B cell (primary cell): ENCODE measurements at regions of chr3 and their contacts with region 1.

Region 1: GRCh38 chr3:14651440-14652251 is at the start of gene CCDC174:
- DNase-seq: peak; percentile 100
- ATAC-seq: peak; percentile 98
- H3K4me3 ChIP-seq: peak within 1 kb of the TSS; percentile 79 to 92 (median 88)
- H3K4me3 Mint-ChIP-seq: peak within 1 kb of the TSS; percentile 91
- H3K27ac ChIP-seq: peak within 1 kb of the TSS; percentile 97 to 98
- H3K27ac Mint-ChIP-seq: peak within 1 kb of the TSS; percentile 94
- H3K4me1 ChIP-seq: peaks cover 21 to 28% of the 10 kb centered on the region in 2 donors
- H3K4me1 Mint-ChIP-seq: peaks cover 36% of the 10 kb centered on the region
- H3K27me3 ChIP-seq: no peaks in the 10 kb centered on the region
- H3K27me3 Mint-ChIP-seq: no peaks in the 10 kb centered on the region
- CTCF ChIP-seq: no peak
- total RNA-seq, gene CCDC174: 36.5 and 47.1 TPM in 2 replicates

Region 2: GRCh38 chr3:13895155-13896105 is 756.2 kb before region 1 on chr3:
- CTCF ChIA-PET with region 1: no interaction called
- POLR2A ChIA-PET with region 1: no interaction called
- intact Hi-C with region 1: loop called (anchors 2 kb)
- DNase-seq: peak; percentile 92
- ATAC-seq: peak; percentile 98
- H3K4me3 ChIP-seq: peak overlapping the region; percentile 32 to 75 (median 64)
- H3K4me3 Mint-ChIP-seq: peak overlapping the region; percentile 89
- H3K27ac ChIP-seq: peak overlapping the region in 1 of 2 donors; percentile 58
- H3K27ac Mint-ChIP-seq: peak overlapping the region; percentile 69
- H3K4me1 ChIP-seq: peaks cover 17 to 33% of the 10 kb centered on the region in 2 donors
- H3K4me1 Mint-ChIP-seq: peaks cover 30% of the 10 kb centered on the region
- H3K27me3 ChIP-seq: peaks cover 0 to 7% (median 0%) of the 10 kb centered on the region in 4 experiments
- H3K27me3 Mint-ChIP-seq: peaks cover 20% of the 10 kb centered on the region
- CTCF ChIP-seq: no peak

Region 3: DNA sequence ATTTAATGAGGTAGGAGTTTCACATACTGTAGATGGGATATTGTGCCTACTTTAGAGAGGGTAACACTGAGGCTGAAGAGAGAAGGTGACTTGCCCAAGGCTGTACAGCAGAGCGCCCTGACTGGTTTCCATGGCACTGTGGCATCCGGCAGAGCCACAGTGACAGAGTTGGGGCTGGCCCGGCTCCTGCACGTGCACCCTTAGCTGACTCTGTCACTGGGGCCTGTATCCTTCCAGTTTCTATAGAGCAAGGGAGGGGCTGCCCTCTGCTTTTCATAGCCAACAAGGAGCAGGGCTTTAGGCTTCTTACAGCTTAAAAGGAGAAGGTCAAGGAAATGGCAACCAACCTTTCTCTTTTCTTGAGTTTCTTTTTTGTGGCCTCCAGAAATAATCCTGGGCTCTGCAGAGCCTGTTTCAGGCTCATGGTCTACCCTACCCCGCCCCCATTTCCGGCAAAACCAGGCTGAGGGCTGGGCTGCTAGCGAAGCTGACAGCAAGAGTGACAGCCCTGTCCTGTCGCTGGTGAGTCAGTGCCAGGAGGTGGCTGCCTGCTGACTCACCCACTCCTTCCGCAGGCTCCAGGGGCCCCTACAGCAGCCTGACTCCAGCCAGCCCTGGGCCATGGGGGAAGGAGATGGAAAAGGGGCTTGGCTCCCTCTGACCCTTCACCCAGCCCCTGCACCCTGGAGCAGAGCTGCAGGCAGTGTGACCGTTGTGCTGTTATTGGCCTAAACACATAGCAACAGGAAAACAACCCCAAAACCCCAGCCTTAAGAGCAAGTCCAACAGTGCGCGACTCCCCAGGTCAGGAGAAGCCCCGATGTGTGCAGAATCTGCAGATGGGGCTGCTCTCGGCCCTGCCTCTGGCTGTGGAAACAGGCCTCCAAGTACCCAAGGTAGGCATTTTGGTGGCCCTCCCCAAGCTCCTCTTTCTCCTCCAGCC is 219.5 kb before region 1 on chr3:
- CTCF ChIA-PET with region 1: no interaction called
- POLR2A ChIA-PET with region 1: no interaction called
- intact Hi-C with region 1: loop called (anchors 1 kb)
- DNase-seq: peak; percentile 94
- ATAC-seq: peak; percentile 78
- H3K4me3 ChIP-seq: peak overlapping the region in 4 of 5 experiments; percentile 5 to 59 (median 34)
- H3K4me3 Mint-ChIP-seq: peak overlapping the region; percentile 80
- H3K27ac ChIP-seq: peak overlapping the region; percentile 93 to 98
- H3K27ac Mint-ChIP-seq: peak overlapping the region; percentile 94
- H3K4me1 ChIP-seq: peaks cover 75 to 89% of the 10 kb centered on the region in 2 donors
- H3K4me1 Mint-ChIP-seq: peaks cover 88% of the 10 kb centered on the region
- H3K27me3 ChIP-seq: no peaks in the 10 kb centered on the region
- H3K27me3 Mint-ChIP-seq: no peaks in the 10 kb centered on the region
- CTCF ChIP-seq: no peak

Region 4: DNA sequence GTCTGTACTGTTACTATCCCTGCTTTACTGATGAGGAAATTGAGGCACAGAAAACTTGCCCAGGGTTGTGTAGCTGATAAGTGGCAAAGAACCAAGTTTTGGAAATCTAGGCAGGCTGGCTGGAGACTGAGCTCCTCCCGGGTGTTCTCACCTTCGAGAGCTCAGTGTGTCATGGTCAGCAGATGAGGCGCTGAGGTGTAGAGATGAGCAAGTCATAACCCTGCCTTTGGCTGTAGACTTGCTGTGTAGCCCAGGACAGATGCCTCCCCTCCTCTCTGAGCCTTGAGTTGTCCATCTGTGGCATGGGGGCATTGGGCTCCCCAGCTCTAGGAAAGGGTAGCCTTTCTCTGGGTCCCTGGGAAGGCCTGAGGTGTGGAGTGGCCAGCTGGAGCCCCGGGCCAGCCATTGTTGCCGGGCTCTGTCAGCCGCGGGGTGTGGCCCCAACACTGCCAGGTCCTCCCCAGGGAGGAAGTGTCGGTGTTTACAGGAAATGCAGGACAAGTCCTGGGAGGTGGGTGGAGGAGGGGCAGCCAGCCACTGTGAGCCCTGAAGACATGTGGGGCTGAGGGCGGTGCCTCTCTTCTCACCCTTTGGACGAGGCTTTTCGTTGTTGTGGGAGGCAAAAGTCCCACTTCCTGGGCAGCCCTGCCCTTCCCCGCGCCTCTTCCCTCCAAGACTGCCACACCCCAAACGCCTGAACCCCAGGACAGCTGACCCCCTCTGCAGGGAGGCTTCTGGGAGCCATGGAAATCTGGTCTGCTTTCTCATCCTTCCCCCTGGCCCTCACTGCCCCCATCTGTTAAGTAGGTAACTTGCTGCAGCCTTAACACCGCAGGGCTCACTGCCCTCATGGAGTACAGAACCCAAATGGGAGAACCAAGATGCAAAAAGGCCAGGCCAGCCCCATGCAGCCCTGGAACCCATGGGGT is 196.2 kb after region 1 on chr3:
- CTCF ChIA-PET with region 1: no interaction called
- POLR2A ChIA-PET with region 1: no interaction called
- intact Hi-C with region 1: no loop called
- DNase-seq: peak; percentile 12
- ATAC-seq: peak; percentile 68
- H3K4me3 ChIP-seq: no peak overlapping the region
- H3K4me3 Mint-ChIP-seq: peak overlapping the region; percentile 52
- H3K27ac ChIP-seq: no peak overlapping the region
- H3K27ac Mint-ChIP-seq: peak overlapping the region; percentile 81
- H3K4me1 ChIP-seq: peaks cover 9 to 17% of the 10 kb centered on the region in 2 donors
- H3K4me1 Mint-ChIP-seq: peaks cover 30% of the 10 kb centered on the region
- H3K27me3 ChIP-seq: peaks cover 0 to 5% (median 2%) of the 10 kb centered on the region in 4 experiments
- H3K27me3 Mint-ChIP-seq: peaks cover 8% of the 10 kb centered on the region
- CTCF ChIP-seq: no peak

Region 5: DNA sequence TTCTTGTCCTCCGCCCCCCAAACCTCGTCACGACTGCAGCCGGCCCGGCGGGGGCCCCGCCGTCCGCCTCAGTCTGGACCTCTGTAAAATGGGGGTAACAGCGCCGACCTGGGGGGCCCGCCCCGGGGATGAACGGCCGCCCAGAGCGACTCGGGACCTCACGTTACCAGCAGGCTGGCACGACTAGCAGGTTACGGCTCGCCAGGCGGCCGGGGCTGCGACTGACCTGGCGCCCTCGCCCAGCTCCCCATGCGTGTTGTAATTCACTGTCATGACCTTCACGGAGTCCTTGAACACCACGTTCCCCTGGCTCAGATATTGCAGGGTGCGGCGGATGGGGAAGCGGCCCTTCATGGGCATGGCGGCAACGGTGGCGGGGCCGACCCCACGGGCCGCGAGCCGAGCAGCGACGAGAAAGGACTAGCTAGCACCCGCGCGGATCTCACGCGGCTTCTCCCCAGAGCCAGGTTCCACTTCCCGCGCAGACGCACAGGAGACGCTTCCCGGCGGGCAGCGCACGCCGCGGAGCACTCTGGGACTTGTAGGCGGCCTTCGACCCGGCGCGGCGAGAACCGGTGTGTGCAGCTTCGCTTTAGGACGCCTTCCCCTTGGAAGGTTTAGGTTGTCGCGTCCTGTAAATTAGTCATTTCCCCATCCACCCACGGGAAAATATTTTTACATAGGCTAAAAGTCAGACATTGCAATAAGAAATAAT is 413.3 kb after region 1 on chr3 and contains the start of gene MRPS25:
- CTCF ChIA-PET with region 1: no interaction called
- POLR2A ChIA-PET with region 1: interaction called, 4 read pairs
- intact Hi-C with region 1: loop called (anchors 2 kb)
- DNase-seq: peak; percentile 92
- ATAC-seq: peak; percentile 98
- H3K4me3 ChIP-seq: peak within 1 kb of the TSS; percentile 36 to 93 (median 79)
- H3K4me3 Mint-ChIP-seq: peak within 1 kb of the TSS; percentile 100
- H3K27ac ChIP-seq: peak within 1 kb of the TSS; percentile 66 to 89
- H3K27ac Mint-ChIP-seq: peak within 1 kb of the TSS; percentile 98
- H3K4me1 ChIP-seq: peaks cover 18 to 23% of the 10 kb centered on the region in 2 donors
- H3K4me1 Mint-ChIP-seq: peaks cover 23% of the 10 kb centered on the region
- H3K27me3 ChIP-seq: no peaks in the 10 kb centered on the region
- H3K27me3 Mint-ChIP-seq: no peaks in the 10 kb centered on the region
- CTCF ChIP-seq: no peak
- total RNA-seq, gene MRPS25: 105 and 108 TPM in 2 replicates

Region 6: GRCh38 chr3:15427182-15427880 is 775.7 kb after region 1 on chr3 and contains the starts of genes EAF1 and METTL6:
- CTCF ChIA-PET with region 1: no interaction called
- POLR2A ChIA-PET with region 1: no interaction called
- intact Hi-C with region 1: loop called (anchors 5 kb)
- DNase-seq: peak; percentile 88
- ATAC-seq: peak; percentile 89
- H3K4me3 ChIP-seq: peak within 1 kb of the TSS; percentile 88 to 99 (median 94)
- H3K4me3 Mint-ChIP-seq: peak within 1 kb of the TSS; percentile 95
- H3K27ac ChIP-seq: peak within 1 kb of the TSS; percentile 75 to 85
- H3K27ac Mint-ChIP-seq: peak within 1 kb of the TSS; percentile 92
- H3K4me1 ChIP-seq: peaks cover 19 to 28% of the 10 kb centered on the region in 2 donors
- H3K4me1 Mint-ChIP-seq: peaks cover 45% of the 10 kb centered on the region
- H3K27me3 ChIP-seq: no peaks in the 10 kb centered on the region
- H3K27me3 Mint-ChIP-seq: no peaks in the 10 kb centered on the region
- CTCF ChIP-seq: peak; percentile 56
- total RNA-seq, gene EAF1: 19.8 TPM in 2 replicates
- total RNA-seq, gene METTL6: 23.9 and 27.1 TPM in 2 replicates

Region 7: GRCh38 chr3:15859507-15860013 is 1207.9 kb after region 1 on chr3:
- CTCF ChIA-PET with region 1: no interaction called
- POLR2A ChIA-PET with region 1: no interaction called
- intact Hi-C with region 1: loop called (anchors 5 kb)
- DNase-seq: peak; percentile 86
- ATAC-seq: peak; percentile 76
- H3K4me3 ChIP-seq: peak overlapping the region in 4 of 5 experiments; percentile 66 to 87 (median 81)
- H3K4me3 Mint-ChIP-seq: peak overlapping the region; percentile 86
- H3K27ac ChIP-seq: peak overlapping the region; percentile 73 to 87
- H3K27ac Mint-ChIP-seq: peak overlapping the region; percentile 97
- H3K4me1 ChIP-seq: peaks cover 10 to 16% of the 10 kb centered on the region in 2 donors
- H3K4me1 Mint-ChIP-seq: peaks cover 24% of the 10 kb centered on the region
- H3K27me3 ChIP-seq: no peaks in the 10 kb centered on the region
- H3K27me3 Mint-ChIP-seq: no peaks in the 10 kb centered on the region
- CTCF ChIP-seq: no peak